CD4-positive, alpha-beta T cell (primary cell): ENCODE measurements at regions of chr17 and their contacts with region 1.

Region 1: DNA sequence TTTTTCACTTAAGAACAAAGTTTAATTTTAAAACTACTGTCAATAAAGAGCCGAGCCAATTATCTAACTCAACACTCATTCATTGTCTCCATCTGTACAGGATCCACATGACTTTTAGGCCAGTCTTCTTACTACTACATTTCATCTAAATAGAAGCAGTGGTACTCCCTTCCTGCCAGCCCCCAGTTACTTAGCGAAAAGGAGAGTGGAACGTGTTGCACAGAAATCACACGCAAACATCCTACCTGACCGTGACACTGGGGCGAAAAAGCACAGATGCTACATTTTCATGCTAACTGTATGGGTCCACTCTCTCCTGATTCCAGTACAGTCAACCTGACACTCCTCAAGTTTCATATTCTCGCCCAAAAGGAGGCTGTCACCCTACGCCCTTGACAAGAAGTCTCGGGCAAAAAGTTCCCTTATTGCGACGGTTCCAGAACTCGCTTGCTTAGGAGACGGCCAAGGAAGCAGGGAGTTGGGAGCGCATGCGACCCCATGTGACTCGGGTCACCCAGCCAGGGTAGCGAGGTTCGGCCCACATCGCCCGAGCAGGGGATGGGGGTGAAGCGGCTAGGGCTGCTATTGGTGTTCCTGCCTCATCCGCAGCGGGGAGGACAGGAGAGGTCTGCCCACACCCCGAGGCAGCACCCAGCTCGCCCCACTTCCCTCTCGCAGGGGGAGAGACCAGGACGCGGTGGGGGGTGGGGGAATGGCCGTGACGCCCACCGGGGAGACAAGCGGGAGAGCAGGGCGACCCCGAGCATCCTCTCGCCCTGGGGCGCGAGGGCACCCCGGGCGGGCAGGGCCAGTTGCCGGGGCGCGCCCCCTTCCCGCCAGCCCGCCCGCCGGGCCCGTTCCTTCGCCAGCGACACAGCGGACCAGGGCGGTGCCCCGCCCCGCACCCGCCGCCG is 935 bp downstream of the GNA13 start:
- DNase-seq: peak; percentile 26 to 72 (median 49)
- ATAC-seq: peak; percentile 31
- H3K4me3 ChIP-seq: peak overlapping the region; percentile 96
- H3K4me3 Mint-ChIP-seq: peak overlapping the region; percentile 99
- H3K27ac ChIP-seq: peak overlapping the region; percentile 95 to 96
- H3K27ac Mint-ChIP-seq: peak overlapping the region; percentile 97
- H3K4me1 ChIP-seq: peaks cover 32% of the 10 kb centered on the region
- H3K4me1 Mint-ChIP-seq: peaks cover 50% of the 10 kb centered on the region
- H3K27me3 ChIP-seq: no peaks in the 10 kb centered on the region
- H3K27me3 Mint-ChIP-seq: no peaks in the 10 kb centered on the region
- CTCF ChIP-seq: no peak

Region 2: GRCh38 chr17:64968652-64969501 is 86.7 kb before region 1 on chr17:
- CTCF ChIA-PET with region 1: no interaction called
- POLR2A ChIA-PET with region 1: interaction called, 65 read pairs
- intact Hi-C with region 1: loop called in 1 of 2 experiments (anchors 2 kb)
- DNase-seq: peak in 3 of 14 experiments; percentile 50 to 78 (median 62)
- ATAC-seq: peak; percentile 15
- H3K4me3 ChIP-seq: no peak overlapping the region
- H3K4me3 Mint-ChIP-seq: peak overlapping the region; percentile 76
- H3K27ac ChIP-seq: peak overlapping the region; percentile 48 to 57
- H3K27ac Mint-ChIP-seq: peak overlapping the region; percentile 88
- H3K4me1 ChIP-seq: peaks cover 45% of the 10 kb centered on the region
- H3K4me1 Mint-ChIP-seq: peaks cover 77% of the 10 kb centered on the region
- H3K27me3 ChIP-seq: no peaks in the 10 kb centered on the region
- H3K27me3 Mint-ChIP-seq: no peaks in the 10 kb centered on the region
- CTCF ChIP-seq: no peak

Region 3: GRCh38 chr17:64984851-64985521 is 70.6 kb before region 1 on chr17:
- CTCF ChIA-PET with region 1: interaction called, 4 read pairs
- POLR2A ChIA-PET with region 1: interaction called, 35 read pairs
- intact Hi-C with region 1: loop called in 1 of 2 experiments (anchors 2 kb)
- DNase-seq: peak; percentile 22 to 92 (median 54)
- ATAC-seq: peak; percentile 58
- H3K4me3 ChIP-seq: peak overlapping the region; percentile 1
- H3K4me3 Mint-ChIP-seq: peak overlapping the region; percentile 80
- H3K27ac ChIP-seq: peak overlapping the region; percentile 93 to 94
- H3K27ac Mint-ChIP-seq: peak overlapping the region; percentile 98
- H3K4me1 ChIP-seq: peaks cover 40% of the 10 kb centered on the region
- H3K4me1 Mint-ChIP-seq: peaks cover 43% of the 10 kb centered on the region
- H3K27me3 ChIP-seq: no peaks in the 10 kb centered on the region
- H3K27me3 Mint-ChIP-seq: no peaks in the 10 kb centered on the region
- CTCF ChIP-seq: no peak

Region 4: GRCh38 chr17:65027305-65027704 is 28.3 kb before region 1 on chr17:
- CTCF ChIA-PET with region 1: no interaction called
- POLR2A ChIA-PET with region 1: interaction called, 7 read pairs
- intact Hi-C with region 1: loop called in 1 of 2 experiments (anchors 2 kb)
- DNase-seq: peak in 11 of 14 experiments; percentile 21 to 82 (median 42)
- ATAC-seq: peak; percentile 77
- H3K4me3 ChIP-seq: no peak overlapping the region
- H3K4me3 Mint-ChIP-seq: peak overlapping the region; percentile 81
- H3K27ac ChIP-seq: no peak overlapping the region
- H3K27ac Mint-ChIP-seq: peak overlapping the region; percentile 61
- H3K4me1 ChIP-seq: peaks cover 48% of the 10 kb centered on the region
- H3K4me1 Mint-ChIP-seq: peaks cover 94% of the 10 kb centered on the region
- H3K27me3 ChIP-seq: no peaks in the 10 kb centered on the region
- H3K27me3 Mint-ChIP-seq: no peaks in the 10 kb centered on the region
- CTCF ChIP-seq: peak; percentile 29

Region 5: DNA sequence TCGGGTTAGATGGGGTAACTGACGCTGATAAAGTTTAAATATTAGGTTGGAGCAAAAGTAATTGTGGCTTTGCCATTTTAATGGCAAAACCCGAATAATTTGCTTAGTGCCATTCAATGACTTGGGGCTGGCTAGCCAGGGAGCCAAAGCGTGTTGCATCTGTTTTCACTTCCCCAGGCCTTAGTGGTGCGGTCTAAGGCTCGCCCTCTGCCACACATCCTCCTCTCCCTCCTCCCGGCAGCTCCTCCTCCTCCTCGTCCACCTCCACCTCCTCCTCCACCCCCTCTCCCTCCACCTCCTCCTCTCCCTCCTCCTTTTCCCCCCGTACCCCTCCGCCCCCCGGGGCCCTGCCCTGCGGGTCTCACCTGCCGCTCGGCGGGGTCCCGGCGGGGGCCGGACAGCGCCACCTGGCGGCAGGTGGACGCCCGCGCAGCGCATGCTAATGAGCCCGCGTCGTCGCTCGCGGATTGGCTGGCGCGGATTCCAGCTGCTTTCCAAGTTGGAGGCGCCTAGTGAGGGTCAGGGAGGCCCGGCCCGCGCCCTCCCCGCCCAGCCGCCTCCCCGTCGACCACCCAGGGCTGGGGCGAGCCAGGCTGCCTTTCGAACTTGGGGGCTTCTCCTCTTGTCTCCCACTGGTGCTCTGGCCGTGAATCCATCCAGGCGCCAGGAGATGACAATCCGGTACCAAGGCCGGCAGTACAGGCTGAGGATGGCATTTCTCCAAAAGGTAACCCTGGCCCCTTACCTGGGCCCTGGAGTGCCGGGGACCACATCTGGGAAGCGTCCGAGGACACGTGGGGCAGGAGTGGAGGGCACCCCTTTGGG is 44.9 kb after region 1 on chr17:
- CTCF ChIA-PET with region 1: interaction called, 10 read pairs
- POLR2A ChIA-PET with region 1: interaction called, 12 read pairs
- intact Hi-C with region 1: loop called (anchors 2 kb)
- DNase-seq: peak; percentile 67 to 92 (median 77)
- ATAC-seq: peak; percentile 87
- H3K4me3 ChIP-seq: peak overlapping the region; percentile 68
- H3K4me3 Mint-ChIP-seq: peak overlapping the region; percentile 88
- H3K27ac ChIP-seq: peak overlapping the region in 1 of 2 donors; percentile 56
- H3K27ac Mint-ChIP-seq: peak overlapping the region; percentile 89
- H3K4me1 ChIP-seq: peaks cover 19% of the 10 kb centered on the region
- H3K4me1 Mint-ChIP-seq: peaks cover 26% of the 10 kb centered on the region
- H3K27me3 ChIP-seq: no peaks in the 10 kb centered on the region
- H3K27me3 Mint-ChIP-seq: no peaks in the 10 kb centered on the region
- CTCF ChIP-seq: peak; percentile 76

Region 6: DNA sequence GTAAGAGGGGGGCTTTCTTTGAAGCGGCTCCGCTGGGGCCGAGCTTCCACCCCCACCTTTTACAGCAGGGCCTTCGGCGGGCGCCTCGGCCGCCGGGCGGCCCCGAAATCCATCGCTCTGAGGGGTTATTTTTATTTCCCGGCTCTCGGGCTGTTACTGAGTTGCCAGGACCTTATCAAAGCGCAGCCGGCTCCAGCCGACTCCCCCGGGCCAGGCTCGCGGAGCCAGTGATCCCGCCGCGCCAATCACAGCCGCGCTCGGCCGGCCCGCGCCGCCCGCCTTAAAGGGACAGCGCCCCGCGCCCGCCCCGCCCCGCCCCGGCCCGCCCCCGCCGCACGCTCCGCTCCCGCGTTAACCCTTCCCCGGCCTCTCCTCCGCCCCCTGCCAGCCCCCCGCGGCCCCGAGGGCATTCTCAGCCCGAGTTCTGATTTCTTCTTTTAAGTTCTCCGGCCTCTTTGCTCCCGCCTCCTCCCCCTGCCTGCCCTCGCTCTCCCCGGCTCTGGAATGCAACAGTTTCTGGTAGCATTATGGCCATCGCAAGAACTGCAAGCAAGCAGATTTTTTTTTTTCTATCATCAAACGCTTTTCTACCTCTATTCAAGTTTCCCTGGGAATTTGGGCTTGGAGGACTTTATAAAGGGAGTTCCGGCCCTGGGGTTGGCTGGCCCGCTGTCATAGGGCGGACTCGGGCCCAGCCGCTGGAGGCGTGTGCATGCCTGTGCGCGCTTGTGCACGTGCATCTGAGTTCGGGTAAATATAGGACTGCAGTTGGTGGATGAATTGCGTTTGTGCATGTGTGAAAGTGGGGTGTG is 506.0 kb after region 1 on chr17 and contains the start of gene AXIN2:
- CTCF ChIA-PET with region 1: no interaction called
- POLR2A ChIA-PET with region 1: no interaction called
- intact Hi-C with region 1: loop called in 1 of 2 experiments (anchors 10 kb)
- DNase-seq: peak; percentile 77 to 93 (median 87)
- ATAC-seq: peak; percentile 75
- H3K4me3 ChIP-seq: peak within 1 kb of the TSS; percentile 66
- H3K4me3 Mint-ChIP-seq: peak within 1 kb of the TSS; percentile 94
- H3K27ac ChIP-seq: peak within 1 kb of the TSS; percentile 78 to 80
- H3K27ac Mint-ChIP-seq: peak within 1 kb of the TSS; percentile 92
- H3K4me1 ChIP-seq: peaks cover 21% of the 10 kb centered on the region
- H3K4me1 Mint-ChIP-seq: peaks cover 42% of the 10 kb centered on the region
- H3K27me3 ChIP-seq: no peaks in the 10 kb centered on the region
- H3K27me3 Mint-ChIP-seq: no peaks in the 10 kb centered on the region
- CTCF ChIP-seq: no peak
- total RNA-seq, gene AXIN2: 47.9 to 49.8 TPM